ENCODE measurements at regions of chr1 and their contacts with region 1.

Region 1: GRCh38 chr1:84944767-84945486 is 51.9 kb upstream of the LPAR3 start:
- DNase-seq: peak; percentile 87
- H3K4me3 ChIP-seq: peak overlapping the region; percentile 8
- H3K27ac ChIP-seq: peak overlapping the region; percentile 67
- H3K4me1 ChIP-seq: no peaks in the 10 kb centered on the region
- H3K27me3 ChIP-seq: no peaks in the 10 kb centered on the region
- CTCF ChIP-seq: peak; percentile 94

Region 2: GRCh38 chr1:85027242-85027983 is 82.5 kb after region 1 on chr1:
- intact Hi-C with region 1: loop called (anchors 5 kb)
- DNase-seq: no peak
- H3K4me3 ChIP-seq: no peak overlapping the region
- H3K27ac ChIP-seq: no peak overlapping the region
- H3K4me1 ChIP-seq: no peaks in the 10 kb centered on the region
- H3K27me3 ChIP-seq: no peaks in the 10 kb centered on the region
- CTCF ChIP-seq: no peak

Region 3: DNA sequence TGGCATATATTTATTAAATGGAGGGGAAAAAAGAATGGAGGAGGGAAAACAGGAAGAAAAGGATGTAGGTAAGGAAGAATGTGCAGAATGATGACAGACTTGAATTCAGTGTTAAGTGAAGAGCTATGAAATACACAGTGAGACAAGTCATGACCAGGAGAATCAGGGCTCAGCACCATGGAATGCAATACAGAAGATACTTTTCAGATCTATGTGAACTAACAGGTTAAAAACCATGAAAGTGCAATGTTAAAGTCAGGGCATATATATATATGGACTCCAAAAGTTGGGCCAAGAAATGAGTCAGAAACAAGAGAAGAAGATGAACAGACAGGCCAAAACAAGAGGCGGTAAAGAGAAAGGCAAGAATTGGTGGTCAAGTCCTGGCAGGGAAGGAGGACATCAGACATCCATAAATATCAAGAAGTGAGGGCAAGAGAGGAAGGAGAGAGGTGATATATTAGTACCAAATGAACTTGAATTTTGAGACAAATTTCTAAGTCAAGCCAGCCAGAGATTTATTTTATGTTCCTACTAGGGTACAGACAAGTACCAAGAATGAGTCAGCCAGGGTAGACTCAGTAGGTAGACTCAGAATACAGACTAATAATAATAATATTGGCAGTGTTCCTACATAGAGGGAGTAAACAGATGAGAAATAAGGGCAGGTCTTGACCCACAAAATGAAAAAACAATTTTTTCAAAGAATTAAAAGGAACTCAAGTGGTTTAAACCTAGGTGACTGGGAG is 142.9 kb after region 1 on chr1:
- intact Hi-C with region 1: loop called (anchors 10 kb)
- DNase-seq: no peak
- H3K4me3 ChIP-seq: no peak overlapping the region
- H3K27ac ChIP-seq: no peak overlapping the region
- H3K4me1 ChIP-seq: no peaks in the 10 kb centered on the region
- H3K27me3 ChIP-seq: no peaks in the 10 kb centered on the region
- CTCF ChIP-seq: no peak

Region 4: GRCh38 chr1:85148524-85149250 is 203.8 kb after region 1 on chr1:
- intact Hi-C with region 1: no loop called
- DNase-seq: no peak
- H3K4me3 ChIP-seq: no peak overlapping the region
- H3K27ac ChIP-seq: no peak overlapping the region
- H3K4me1 ChIP-seq: no peaks in the 10 kb centered on the region
- H3K27me3 ChIP-seq: no peaks in the 10 kb centered on the region
- CTCF ChIP-seq: no peak

Region 5: GRCh38 chr1:85259118-85259911 is 314.4 kb after region 1 on chr1 and contains the start of gene C1orf52:
- intact Hi-C with region 1: loop called (anchors 5 kb)
- DNase-seq: peak; percentile 97
- H3K4me3 ChIP-seq: peak within 1 kb of the TSS; percentile 72
- H3K27ac ChIP-seq: peak within 1 kb of the TSS; percentile 42
- H3K4me1 ChIP-seq: peaks cover 2% of the 10 kb centered on the region
- H3K27me3 ChIP-seq: no peaks in the 10 kb centered on the region
- CTCF ChIP-seq: peak; percentile 99
- total RNA-seq, gene C1orf52: 11.3 to 19.9 TPM